ENCODE measurements at regions of chr22 and their contacts with region 1.

Region 1: DNA sequence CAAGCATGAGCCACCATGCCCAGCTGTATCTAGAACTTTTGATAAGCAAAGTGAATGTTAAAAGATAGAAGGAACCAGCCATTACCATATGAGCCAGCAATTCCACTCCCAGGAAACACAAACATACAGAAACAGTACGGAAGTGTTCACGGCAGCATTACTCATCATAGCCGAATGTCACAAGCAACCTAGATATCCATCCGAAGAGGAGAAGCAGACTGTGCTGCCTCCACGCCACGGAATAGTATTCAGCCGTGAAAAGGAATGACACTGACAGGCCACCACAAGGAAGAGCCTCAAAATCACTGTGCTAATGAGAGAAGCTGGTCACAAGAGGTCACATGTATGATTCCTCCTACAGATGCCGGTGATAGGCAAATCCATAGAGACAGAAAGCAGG is 17.6 kb upstream of the MGAT3 start:
- DNase-seq: no peak
- ATAC-seq: no peak
- H3K4me3 ChIP-seq: no peak overlapping the region
- H3K4me3 Mint-ChIP-seq: no peak overlapping the region
- H3K27ac ChIP-seq: no peak overlapping the region
- H3K27ac Mint-ChIP-seq: peak overlapping the region; percentile 17
- H3K4me1 ChIP-seq: peaks cover 18 to 36% of the 10 kb centered on the region in 2 donors
- H3K4me1 Mint-ChIP-seq: peaks cover 36% of the 10 kb centered on the region
- H3K27me3 ChIP-seq: peaks cover 0 to 8% (median 0%) of the 10 kb centered on the region in 4 experiments
- H3K27me3 Mint-ChIP-seq: no peaks in the 10 kb centered on the region
- CTCF ChIP-seq: no peak

Region 2: GRCh38 chr22:39392341-39392948 is 46.7 kb before region 1 on chr22:
- CTCF ChIA-PET with region 1: no interaction called
- POLR2A ChIA-PET with region 1: no interaction called
- intact Hi-C with region 1: no loop called
- DNase-seq: no peak
- ATAC-seq: no peak
- H3K4me3 ChIP-seq: no peak overlapping the region
- H3K4me3 Mint-ChIP-seq: no peak overlapping the region
- H3K27ac ChIP-seq: no peak overlapping the region
- H3K27ac Mint-ChIP-seq: no peak overlapping the region
- H3K4me1 ChIP-seq: peaks cover 0 to 14% of the 10 kb centered on the region in 2 donors
- H3K4me1 Mint-ChIP-seq: peaks cover 5% of the 10 kb centered on the region
- H3K27me3 ChIP-seq: no peaks in the 10 kb centered on the region
- H3K27me3 Mint-ChIP-seq: no peaks in the 10 kb centered on the region
- CTCF ChIP-seq: no peak

Region 3: DNA sequence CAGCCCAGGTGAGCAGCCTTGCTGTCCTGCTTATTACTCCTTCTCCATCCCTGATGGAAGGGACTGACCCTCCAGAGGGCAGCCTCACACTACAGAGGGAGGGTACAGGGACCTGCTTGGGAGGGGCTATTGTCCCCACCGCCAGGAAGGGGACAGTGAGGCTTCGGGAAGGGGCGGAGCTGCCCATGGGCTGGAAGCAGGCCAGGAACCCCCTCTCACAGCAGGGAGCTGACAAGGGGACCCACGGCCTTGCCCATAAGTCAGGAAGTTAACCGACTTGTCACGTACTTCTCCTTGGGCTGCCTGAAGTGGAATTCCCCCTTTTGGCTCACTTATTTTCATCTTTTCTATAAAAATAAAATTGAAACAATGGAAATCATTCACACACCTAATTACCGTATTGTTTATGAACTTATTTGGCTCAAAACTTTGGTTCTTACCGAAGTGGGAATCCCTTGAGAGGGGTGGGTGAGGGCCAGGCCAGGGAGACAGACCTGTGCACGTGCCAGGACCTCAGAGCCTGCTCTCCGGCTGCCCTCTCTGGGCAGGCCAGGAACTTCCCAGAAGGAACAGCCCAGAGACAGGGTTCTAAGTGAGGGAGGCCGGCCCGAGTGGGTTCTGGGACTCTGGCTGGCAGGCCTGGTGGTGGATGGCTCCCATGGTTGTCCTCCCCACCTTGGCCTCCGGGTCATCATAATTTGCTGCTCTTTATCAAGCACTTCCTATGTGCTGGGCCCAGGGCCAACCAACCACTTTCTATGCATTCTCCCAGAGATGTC is 23.5 kb after region 1 on chr22:
- CTCF ChIA-PET with region 1: interaction called, 14 read pairs
- POLR2A ChIA-PET with region 1: interaction called, 7 read pairs
- intact Hi-C with region 1: no loop called
- DNase-seq: peak; percentile 67
- ATAC-seq: peak; percentile 19
- H3K4me3 ChIP-seq: no peak overlapping the region
- H3K4me3 Mint-ChIP-seq: peak overlapping the region; percentile 50
- H3K27ac ChIP-seq: peak overlapping the region; percentile 75 to 83
- H3K27ac Mint-ChIP-seq: peak overlapping the region; percentile 62
- H3K4me1 ChIP-seq: peaks cover 60 to 75% of the 10 kb centered on the region in 2 donors
- H3K4me1 Mint-ChIP-seq: peaks cover 77% of the 10 kb centered on the region
- H3K27me3 ChIP-seq: peaks cover 0 to 10% (median 4%) of the 10 kb centered on the region in 4 experiments
- H3K27me3 Mint-ChIP-seq: peaks cover 6% of the 10 kb centered on the region
- CTCF ChIP-seq: no peak

Region 4: DNA sequence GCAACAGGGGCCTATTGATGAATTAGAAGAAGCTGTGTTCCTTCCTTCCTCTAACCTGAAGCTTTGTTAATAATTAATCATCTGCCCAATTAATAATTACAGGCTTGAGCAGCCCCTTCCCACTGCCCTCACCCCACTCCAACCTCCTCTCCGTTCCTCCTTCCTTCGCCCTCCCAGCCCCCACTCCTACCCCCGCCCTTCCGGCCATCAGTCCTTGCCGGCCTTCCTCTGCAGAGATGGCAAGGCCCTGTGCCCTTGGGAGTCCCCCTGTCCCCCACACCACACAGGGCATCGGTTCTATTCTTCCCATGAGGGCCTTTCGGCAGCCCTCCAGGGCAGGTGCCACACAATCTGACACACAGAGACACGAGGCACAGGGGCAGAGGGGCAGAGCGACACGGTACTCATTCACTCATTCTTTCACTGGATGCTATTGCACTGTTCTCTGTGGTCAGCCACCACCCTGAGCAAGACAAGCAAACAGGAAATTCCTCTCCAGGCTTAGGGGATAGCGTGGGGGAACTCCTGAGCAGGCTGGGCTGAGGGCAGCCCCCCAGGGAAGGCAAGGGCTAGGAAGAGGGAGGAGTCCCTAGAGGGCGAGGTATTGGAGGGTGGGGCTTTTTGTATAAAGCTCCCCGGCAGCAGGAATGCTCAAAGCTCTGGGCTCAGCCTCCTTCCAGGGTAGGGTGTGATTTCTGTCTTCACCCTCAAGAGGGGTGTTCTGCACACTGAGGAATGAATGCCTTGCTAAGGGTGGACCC is 32.4 kb after region 1 on chr22:
- CTCF ChIA-PET with region 1: interaction called, 9 read pairs
- POLR2A ChIA-PET with region 1: no interaction called
- intact Hi-C with region 1: loop called (anchors 5 kb)
- DNase-seq: peak; percentile 43
- ATAC-seq: peak; percentile 60
- H3K4me3 ChIP-seq: peak overlapping the region in 1 of 5 experiments; percentile 14
- H3K4me3 Mint-ChIP-seq: peak overlapping the region; percentile 85
- H3K27ac ChIP-seq: peak overlapping the region; percentile 40 to 68
- H3K27ac Mint-ChIP-seq: peak overlapping the region; percentile 89
- H3K4me1 ChIP-seq: peaks cover 41 to 69% of the 10 kb centered on the region in 2 donors
- H3K4me1 Mint-ChIP-seq: peaks cover 64% of the 10 kb centered on the region
- H3K27me3 ChIP-seq: no peaks in the 10 kb centered on the region
- H3K27me3 Mint-ChIP-seq: no peaks in the 10 kb centered on the region
- CTCF ChIP-seq: no peak

Region 5: DNA sequence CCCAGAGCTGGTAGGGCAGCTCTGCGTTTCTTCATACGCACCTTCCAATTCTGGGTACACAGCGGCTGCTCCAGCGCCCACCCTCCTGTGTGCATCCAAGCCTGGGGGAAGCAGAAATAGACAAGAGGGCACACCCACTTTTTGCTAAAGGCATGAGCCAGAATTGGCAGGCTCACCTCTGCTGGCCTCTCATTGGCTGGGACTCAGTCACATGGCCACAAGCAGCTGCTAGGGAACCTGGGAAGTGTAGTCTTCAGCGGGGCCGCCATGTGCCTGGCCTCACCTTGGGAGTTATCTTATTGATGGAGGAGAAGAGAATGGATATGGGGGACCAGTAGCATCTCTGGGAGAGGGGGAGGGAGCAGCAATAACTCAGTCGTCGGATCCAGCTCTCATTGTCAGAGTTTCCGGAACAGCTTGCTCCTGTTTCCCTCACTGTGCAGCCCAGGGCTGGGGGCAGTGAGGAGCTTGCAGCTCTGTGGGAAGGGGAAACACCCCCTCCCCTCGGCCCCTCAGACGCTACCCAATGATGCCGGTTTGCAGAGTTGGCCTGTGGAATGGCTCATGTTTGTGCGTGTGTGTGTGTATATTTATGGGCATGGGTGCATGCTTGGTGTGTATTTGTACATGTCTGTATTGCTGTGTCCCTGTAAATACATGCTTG is 51.1 kb after region 1 on chr22:
- CTCF ChIA-PET with region 1: interaction called, 37 read pairs
- POLR2A ChIA-PET with region 1: interaction called, 9 read pairs
- intact Hi-C with region 1: loop called (anchors 2 kb)
- DNase-seq: peak; percentile 86
- ATAC-seq: peak; percentile 98
- H3K4me3 ChIP-seq: peak overlapping the region in 2 of 5 experiments; percentile 12 to 37
- H3K4me3 Mint-ChIP-seq: peak overlapping the region; percentile 59
- H3K27ac ChIP-seq: no peak overlapping the region
- H3K27ac Mint-ChIP-seq: peak overlapping the region; percentile 79
- H3K4me1 ChIP-seq: peaks cover 4 to 14% of the 10 kb centered on the region in 2 donors
- H3K4me1 Mint-ChIP-seq: peaks cover 21% of the 10 kb centered on the region
- H3K27me3 ChIP-seq: no peaks in the 10 kb centered on the region
- H3K27me3 Mint-ChIP-seq: no peaks in the 10 kb centered on the region
- CTCF ChIP-seq: no peak

Region 6: DNA sequence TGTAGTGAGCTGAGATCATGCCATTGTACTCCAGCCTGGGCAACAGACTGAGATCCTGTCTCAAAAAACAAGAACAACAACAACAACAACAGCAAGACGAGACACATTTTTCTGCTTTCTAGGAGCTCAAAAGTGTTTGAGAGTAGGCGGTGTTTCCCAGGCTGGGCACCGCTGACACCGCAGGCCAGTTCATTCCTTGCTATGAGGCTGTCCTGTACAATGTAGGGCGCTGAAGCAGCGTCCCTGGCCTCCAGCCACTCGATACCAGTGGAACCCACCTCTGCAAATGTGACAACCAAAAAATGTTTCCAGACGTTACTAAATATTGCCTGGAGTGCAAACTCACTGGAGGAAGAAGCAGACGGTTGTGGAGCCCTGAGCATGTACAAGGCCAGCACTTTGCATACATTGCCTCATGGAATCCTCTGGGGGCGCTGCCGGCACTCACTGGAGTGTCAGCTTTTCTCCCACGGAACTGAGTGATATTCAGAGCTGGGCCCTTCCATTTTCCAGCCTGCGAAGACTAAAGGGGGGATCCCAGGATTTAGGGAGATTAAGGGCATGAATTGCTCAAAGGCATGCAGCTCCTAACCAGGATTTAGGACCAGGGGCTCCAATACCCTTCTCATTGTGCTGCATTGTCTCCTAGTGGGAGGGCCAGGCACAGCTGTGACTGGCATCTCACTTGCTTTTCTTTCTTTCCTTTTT is 57.1 kb after region 1 on chr22:
- CTCF ChIA-PET with region 1: interaction called, 37 read pairs
- POLR2A ChIA-PET with region 1: interaction called, 9 read pairs
- intact Hi-C with region 1: loop called (anchors 2 kb)
- DNase-seq: peak; percentile 62
- ATAC-seq: peak; percentile 75
- H3K4me3 ChIP-seq: no peak overlapping the region
- H3K4me3 Mint-ChIP-seq: no peak overlapping the region
- H3K27ac ChIP-seq: no peak overlapping the region
- H3K27ac Mint-ChIP-seq: peak overlapping the region; percentile 70
- H3K4me1 ChIP-seq: peaks cover 4 to 7% of the 10 kb centered on the region in 2 donors
- H3K4me1 Mint-ChIP-seq: peaks cover 16% of the 10 kb centered on the region
- H3K27me3 ChIP-seq: no peaks in the 10 kb centered on the region
- H3K27me3 Mint-ChIP-seq: no peaks in the 10 kb centered on the region
- CTCF ChIP-seq: peak; percentile 73

Region 7: DNA sequence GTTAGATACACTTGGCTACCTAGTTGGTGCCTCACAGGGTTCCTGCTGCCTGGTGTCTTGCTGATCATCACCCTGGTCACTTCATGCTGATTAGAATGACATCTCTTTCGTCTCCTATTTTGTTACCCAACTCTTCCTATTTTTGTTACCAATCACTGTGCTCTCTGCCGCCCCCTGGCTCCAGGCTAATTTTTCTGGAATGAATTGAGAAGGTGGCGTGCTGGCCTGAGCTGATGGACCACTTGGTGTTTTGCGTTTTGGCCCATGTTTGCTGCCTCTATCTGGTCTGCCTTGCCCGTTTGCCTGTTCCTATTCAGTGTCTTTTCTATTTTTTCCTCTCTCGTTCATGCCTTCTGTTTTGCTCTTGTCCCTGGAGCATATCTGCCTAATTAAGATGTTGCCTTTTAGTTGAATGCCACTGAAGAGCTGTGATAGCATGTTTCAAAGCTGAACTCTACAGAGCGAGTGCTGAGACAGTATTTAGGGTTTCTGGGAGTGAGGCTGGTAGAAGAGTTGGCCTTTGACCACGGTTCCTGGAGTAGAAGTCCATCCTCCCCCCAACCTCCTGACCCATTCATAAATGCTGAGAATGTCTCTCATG is 75.3 kb after region 1 on chr22:
- CTCF ChIA-PET with region 1: interaction called, 13 read pairs
- POLR2A ChIA-PET with region 1: interaction called, 5 read pairs
- intact Hi-C with region 1: loop called (anchors 1 kb)
- DNase-seq: peak; percentile 66
- ATAC-seq: peak; percentile 41
- H3K4me3 ChIP-seq: no peak overlapping the region
- H3K4me3 Mint-ChIP-seq: no peak overlapping the region
- H3K27ac ChIP-seq: no peak overlapping the region
- H3K27ac Mint-ChIP-seq: peak overlapping the region; percentile 60
- H3K4me1 ChIP-seq: peaks cover 7 to 9% of the 10 kb centered on the region in 2 donors
- H3K4me1 Mint-ChIP-seq: peaks cover 28% of the 10 kb centered on the region
- H3K27me3 ChIP-seq: no peaks in the 10 kb centered on the region
- H3K27me3 Mint-ChIP-seq: no peaks in the 10 kb centered on the region
- CTCF ChIP-seq: peak; percentile 73

Region 8: DNA sequence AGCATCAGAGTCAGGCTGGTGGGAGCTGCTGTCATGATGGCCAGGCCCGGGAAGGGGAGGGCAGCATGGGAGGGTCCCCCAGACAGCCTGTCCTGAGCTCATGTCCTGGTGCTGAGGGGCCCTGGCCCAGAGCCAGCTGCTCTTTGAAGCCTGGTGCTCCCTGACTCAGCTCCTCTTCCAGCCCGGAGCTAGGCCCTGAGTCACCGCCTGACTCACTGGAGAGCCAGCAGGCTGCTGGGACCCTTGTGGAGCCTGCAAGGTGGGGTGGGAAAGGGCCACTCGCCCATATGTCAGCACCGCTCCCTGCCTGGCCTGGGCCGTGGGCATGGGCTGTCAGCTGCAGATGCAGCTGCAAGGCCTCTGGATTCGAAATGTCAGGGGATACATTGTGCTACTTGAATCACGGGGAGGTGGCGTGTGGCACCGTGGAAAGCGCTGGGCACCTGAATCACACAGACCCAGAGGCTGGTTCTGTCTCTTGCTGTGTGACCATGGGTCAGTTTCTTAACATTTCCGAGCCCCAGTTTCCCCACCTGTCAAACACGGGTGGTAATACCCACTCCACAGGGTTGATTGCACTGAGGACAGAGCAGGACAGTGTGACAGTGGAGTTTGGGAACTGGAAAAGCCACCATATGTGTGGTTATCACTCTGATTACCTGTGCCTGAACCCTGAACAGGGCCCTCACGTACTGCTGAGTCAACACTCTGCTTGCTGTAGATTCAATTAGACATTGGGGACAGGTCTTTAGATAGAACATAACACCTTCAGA is 135.8 kb after region 1 on chr22:
- CTCF ChIA-PET with region 1: no interaction called
- POLR2A ChIA-PET with region 1: no interaction called
- intact Hi-C with region 1: no loop called
- DNase-seq: no peak
- ATAC-seq: no peak
- H3K4me3 ChIP-seq: no peak overlapping the region
- H3K4me3 Mint-ChIP-seq: no peak overlapping the region
- H3K27ac ChIP-seq: no peak overlapping the region
- H3K27ac Mint-ChIP-seq: no peak overlapping the region
- H3K4me1 ChIP-seq: peaks cover 7 to 8% of the 10 kb centered on the region in 2 donors
- H3K4me1 Mint-ChIP-seq: peaks cover 10% of the 10 kb centered on the region
- H3K27me3 ChIP-seq: peaks cover 0 to 6% (median 3%) of the 10 kb centered on the region in 4 experiments
- H3K27me3 Mint-ChIP-seq: peaks cover 23% of the 10 kb centered on the region
- CTCF ChIP-seq: no peak